BJ (cell line): ENCODE measurements at regions of chr10 and their contacts with region 1.

Region 1: DNA sequence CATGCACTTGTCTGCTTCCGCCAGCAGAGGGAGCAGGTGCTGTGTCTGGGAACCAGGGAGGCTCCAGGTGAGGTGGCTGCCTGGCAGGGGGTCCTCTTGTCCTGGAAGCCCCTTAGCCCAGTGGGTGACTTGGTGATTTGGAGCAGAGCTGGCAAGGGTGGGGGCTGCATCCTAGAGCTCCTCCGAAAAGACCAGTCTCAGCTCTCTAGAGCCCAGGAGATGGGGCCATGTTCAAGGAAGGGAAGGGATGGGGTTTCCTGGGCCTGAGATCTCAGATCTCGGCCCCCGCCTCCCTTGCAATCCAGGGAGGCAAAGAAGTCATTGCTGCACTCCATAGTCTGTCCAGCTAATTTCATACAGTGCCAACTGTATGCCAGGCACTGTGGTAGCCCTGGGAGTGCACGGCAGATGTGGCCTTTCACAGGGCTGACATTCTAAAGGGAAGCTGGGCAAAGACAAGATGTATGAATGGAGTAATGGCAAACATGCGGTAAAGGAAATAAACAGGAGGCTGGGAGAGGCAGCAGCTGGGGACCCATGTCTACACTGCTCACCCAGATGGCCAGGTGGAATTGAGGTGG is 20.4 kb upstream of the SFRP5 start:
- DNase-seq: no peak
- H3K4me3 ChIP-seq: no peak overlapping the region
- H3K27me3 ChIP-seq: peaks cover 7% of the 10 kb centered on the region
- CTCF ChIP-seq: peak; percentile 97

Region 2: GRCh38 chr10:97752956-97753355 is 39.3 kb before region 1 on chr10:
- CTCF ChIA-PET with region 1: no interaction called
- POLR2A ChIA-PET with region 1: no interaction called
- DNase-seq: no peak
- H3K4me3 ChIP-seq: no peak overlapping the region
- H3K27me3 ChIP-seq: no peaks in the 10 kb centered on the region
- CTCF ChIP-seq: no peak

Region 3: DNA sequence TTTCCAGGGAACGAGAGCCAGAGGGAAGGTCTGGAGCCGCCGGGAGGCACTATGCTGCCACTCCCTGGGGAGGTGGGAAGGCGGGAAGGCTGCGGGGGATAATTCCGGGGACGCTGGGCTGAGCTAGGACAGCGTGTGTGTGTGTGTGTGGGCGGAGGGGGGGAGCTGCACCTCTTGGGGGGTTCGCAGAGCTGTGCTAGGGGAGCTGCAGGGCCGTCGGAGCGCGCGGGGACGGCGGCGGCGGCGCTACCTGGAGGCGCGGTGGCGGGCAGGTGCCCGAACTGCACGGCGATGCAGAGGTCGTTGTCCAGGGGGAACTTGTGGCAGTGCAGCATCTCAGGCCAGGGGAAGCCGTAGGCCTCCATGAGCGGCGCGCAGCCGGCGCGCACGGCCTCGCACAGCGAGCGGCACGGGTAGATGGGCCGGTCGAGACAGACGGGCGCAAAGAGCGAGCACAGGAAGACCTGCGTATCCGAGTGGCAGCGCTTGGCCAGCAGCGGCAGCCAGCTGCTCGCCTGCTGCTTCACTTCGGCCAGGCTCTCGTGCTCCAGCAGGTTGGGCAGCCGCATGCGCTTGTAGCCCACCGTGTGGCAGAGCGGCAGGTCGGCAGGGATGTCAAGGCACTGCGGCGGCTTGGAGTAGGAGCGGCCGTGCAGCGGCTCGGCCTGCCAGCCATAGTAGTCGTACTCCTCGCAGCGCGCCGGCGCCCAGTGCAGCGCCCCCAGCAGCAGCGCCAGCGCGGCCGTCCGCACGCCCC is 21.0 kb before region 1 on chr10:
- CTCF ChIA-PET with region 1: interaction called, 16 read pairs
- POLR2A ChIA-PET with region 1: no interaction called
- DNase-seq: no peak
- H3K4me3 ChIP-seq: no peak overlapping the region
- H3K27me3 ChIP-seq: peaks cover 26% of the 10 kb centered on the region
- CTCF ChIP-seq: no peak

Region 4: DNA sequence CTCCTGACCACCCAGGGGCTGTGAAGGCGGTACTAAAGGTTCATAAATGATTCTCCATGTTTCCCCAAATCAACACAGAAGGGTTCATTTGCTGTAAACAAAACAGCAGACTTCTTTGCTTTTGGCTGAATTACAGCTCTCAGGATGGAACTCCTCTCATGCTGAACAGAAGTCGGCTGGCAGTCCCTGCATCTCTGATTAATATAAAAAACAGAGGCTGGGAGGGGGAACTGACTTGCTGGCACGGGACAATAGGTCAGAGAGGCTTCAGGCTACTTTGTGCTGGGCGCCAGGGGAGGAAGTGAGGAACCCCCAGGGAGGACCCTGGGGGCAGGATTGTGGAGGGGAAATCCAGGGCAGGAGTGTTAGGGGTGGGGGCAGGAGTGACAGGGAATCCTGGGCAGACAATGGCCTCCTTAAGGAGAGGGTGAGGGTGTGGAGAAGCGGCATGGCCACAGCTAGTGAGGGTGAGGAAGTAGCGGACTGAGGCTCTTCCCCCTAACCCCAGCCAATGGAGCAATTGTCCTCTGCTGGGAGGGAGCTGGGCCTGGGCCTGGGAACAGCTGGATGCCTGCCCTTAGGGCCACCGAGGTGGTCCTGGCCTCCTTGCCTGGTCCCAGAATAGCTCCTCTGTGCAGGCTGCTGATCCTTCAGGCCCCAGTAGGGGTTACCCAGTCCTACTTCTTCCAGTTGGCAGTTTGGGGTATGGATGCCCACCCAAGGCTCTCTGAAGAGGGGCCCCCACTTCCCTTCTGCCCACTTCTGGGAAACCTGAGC is 11.2 kb before region 1 on chr10:
- CTCF ChIA-PET with region 1: interaction called, 40 read pairs
- POLR2A ChIA-PET with region 1: no interaction called
- DNase-seq: no peak
- H3K4me3 ChIP-seq: no peak overlapping the region
- H3K27me3 ChIP-seq: 0 out of 2 replicates have a peak, but pooled peaks cover 1% of the 10 kb centered on the region
- CTCF ChIP-seq: no peak

Region 5: GRCh38 chr10:97858001-97858439 is 65.8 kb after region 1 on chr10:
- CTCF ChIA-PET with region 1: interaction called, 12 read pairs
- POLR2A ChIA-PET with region 1: no interaction called
- DNase-seq: no peak
- H3K4me3 ChIP-seq: no peak overlapping the region
- H3K27me3 ChIP-seq: peaks cover 3% of the 10 kb centered on the region
- CTCF ChIP-seq: no peak

Region 6: DNA sequence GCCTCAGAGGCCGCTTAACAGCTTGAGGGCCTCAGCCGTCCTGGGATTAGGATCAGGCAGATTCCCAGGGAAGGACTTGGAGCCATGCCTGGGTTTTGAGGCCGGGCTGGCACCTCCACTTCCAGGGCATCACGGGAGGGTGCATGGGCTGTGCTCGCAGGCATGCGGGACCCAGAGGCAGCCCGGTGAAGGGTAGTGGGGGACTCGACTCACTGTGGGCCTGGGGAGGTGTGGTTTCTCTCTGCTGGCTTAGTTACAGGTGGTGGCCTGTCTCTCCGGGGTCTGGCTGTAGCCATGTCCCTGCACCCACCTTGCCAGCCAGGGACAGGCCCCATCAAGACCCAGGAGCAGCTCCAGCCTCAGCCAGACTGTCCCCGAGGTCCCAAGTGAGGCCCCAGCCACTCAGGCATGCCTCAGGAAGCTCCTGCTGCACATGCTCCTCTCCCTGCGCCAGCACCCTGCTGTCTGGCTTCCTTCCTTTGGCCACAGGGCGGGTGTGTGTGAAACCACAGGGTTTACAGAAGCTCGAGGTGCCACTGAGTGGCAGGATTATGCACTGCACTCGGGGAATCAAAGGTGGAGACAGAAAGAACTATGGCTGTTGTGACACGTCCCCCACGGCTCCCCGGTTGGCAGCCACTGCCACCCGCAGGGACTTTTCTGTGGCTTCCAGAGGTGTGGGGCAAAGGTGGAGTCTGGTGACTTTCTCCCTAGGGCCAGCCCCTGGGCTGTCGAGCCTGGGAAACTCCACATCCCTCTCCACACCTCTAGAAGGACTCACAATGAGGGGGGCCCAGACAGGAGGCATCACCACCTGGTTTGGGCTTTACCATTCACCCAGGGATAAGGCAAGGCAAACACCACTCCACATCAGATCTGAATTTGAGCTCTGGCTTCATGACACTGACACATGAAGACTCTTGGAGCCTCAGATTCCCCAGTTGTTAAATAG is 77.1 kb after region 1 on chr10:
- CTCF ChIA-PET with region 1: interaction called, 160 read pairs
- POLR2A ChIA-PET with region 1: no interaction called
- DNase-seq: no peak
- H3K4me3 ChIP-seq: no peak overlapping the region
- H3K27me3 ChIP-seq: peaks cover 26% of the 10 kb centered on the region
- CTCF ChIP-seq: peak; percentile 78

Region 7: GRCh38 chr10:97875391-97875790 is 83.2 kb after region 1 on chr10:
- CTCF ChIA-PET with region 1: interaction called, 160 read pairs
- POLR2A ChIA-PET with region 1: no interaction called
- DNase-seq: no peak
- H3K4me3 ChIP-seq: no peak overlapping the region
- H3K27me3 ChIP-seq: peaks cover 28% of the 10 kb centered on the region
- CTCF ChIP-seq: no peak

Region 8: GRCh38 chr10:98045785-98046389 is 253.7 kb after region 1 on chr10:
- CTCF ChIA-PET with region 1: interaction called, 30 read pairs
- POLR2A ChIA-PET with region 1: no interaction called
- DNase-seq: no peak
- H3K4me3 ChIP-seq: no peak overlapping the region
- H3K27me3 ChIP-seq: peaks cover 2% of the 10 kb centered on the region
- CTCF ChIP-seq: peak; percentile 92

Region 9: GRCh38 chr10:98269072-98269912 is 477.1 kb after region 1 on chr10:
- CTCF ChIA-PET with region 1: no interaction called
- POLR2A ChIA-PET with region 1: no interaction called
- DNase-seq: peak; percentile 44
- H3K4me3 ChIP-seq: no peak overlapping the region
- H3K27me3 ChIP-seq: no peaks in the 10 kb centered on the region
- CTCF ChIP-seq: no peak